AG04450 (cell line): ENCODE measurements at regions of chr4 and their contacts with region 1.

Region 1: GRCh38 chr4:128454281-128455075 is 166.9 kb upstream of the PGRMC2 start:
- DNase-seq: peak; percentile 89
- H3K4me3 ChIP-seq: no peak overlapping the region
- H3K27ac ChIP-seq: peak overlapping the region; percentile 21
- H3K27me3 ChIP-seq: no peaks in the 10 kb centered on the region
- CTCF ChIP-seq: peak; percentile 90

Region 2: DNA sequence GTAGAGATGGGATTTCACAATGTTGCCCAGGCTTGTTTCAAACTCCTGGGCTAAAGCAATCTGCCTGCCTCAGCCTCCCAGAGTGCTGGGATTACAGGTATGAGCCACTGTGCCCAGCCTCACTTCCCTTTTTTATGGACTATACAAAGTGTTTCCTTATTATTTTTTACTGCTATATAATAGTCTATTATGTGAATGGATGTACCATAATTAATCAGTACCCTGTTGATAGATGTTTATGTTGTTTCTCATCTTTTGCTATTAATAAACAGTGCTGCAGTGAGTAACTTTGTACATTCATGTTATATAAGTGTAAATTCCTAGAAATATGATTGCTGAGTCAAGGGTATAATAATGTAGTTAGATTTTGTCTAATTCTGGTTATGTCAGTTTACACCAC is 429.2 kb before region 1 on chr4:
- CTCF ChIA-PET with region 1: no interaction called
- POLR2A ChIA-PET with region 1: no interaction called
- DNase-seq: no peak
- H3K4me3 ChIP-seq: no peak overlapping the region
- H3K27ac ChIP-seq: no peak overlapping the region
- H3K27me3 ChIP-seq: no peaks in the 10 kb centered on the region
- CTCF ChIP-seq: no peak

Region 3: GRCh38 chr4:128191115-128191781 is 263.2 kb before region 1 on chr4:
- CTCF ChIA-PET with region 1: interaction called, 12 read pairs
- POLR2A ChIA-PET with region 1: no interaction called
- DNase-seq: peak; percentile 51
- H3K4me3 ChIP-seq: no peak overlapping the region
- H3K27ac ChIP-seq: no peak overlapping the region
- H3K27me3 ChIP-seq: no peaks in the 10 kb centered on the region
- CTCF ChIP-seq: peak; percentile 86

Region 4: GRCh38 chr4:128393101-128393704 is 61.3 kb before region 1 on chr4:
- CTCF ChIA-PET with region 1: interaction called, 10 read pairs
- POLR2A ChIA-PET with region 1: no interaction called
- DNase-seq: no peak
- H3K4me3 ChIP-seq: no peak overlapping the region
- H3K27ac ChIP-seq: no peak overlapping the region
- H3K27me3 ChIP-seq: no peaks in the 10 kb centered on the region
- CTCF ChIP-seq: no peak

Region 5: GRCh38 chr4:128471576-128471975 is 17.1 kb after region 1 on chr4:
- CTCF ChIA-PET with region 1: interaction called, 43 read pairs
- POLR2A ChIA-PET with region 1: no interaction called
- DNase-seq: no peak
- H3K4me3 ChIP-seq: no peak overlapping the region
- H3K27ac ChIP-seq: no peak overlapping the region
- H3K27me3 ChIP-seq: no peaks in the 10 kb centered on the region
- CTCF ChIP-seq: no peak

Region 6: GRCh38 chr4:128502818-128503527 is 48.5 kb after region 1 on chr4:
- CTCF ChIA-PET with region 1: interaction called, 10 read pairs
- POLR2A ChIA-PET with region 1: no interaction called
- DNase-seq: no peak
- H3K4me3 ChIP-seq: no peak overlapping the region
- H3K27ac ChIP-seq: no peak overlapping the region
- H3K27me3 ChIP-seq: no peaks in the 10 kb centered on the region
- CTCF ChIP-seq: no peak

Region 7: GRCh38 chr4:128553686-128554515 is 99.4 kb after region 1 on chr4:
- CTCF ChIA-PET with region 1: interaction called, 25 read pairs
- POLR2A ChIA-PET with region 1: interaction called, 7 read pairs
- DNase-seq: no peak
- H3K4me3 ChIP-seq: peak overlapping the region; percentile 70
- H3K27ac ChIP-seq: peak overlapping the region; percentile 47
- H3K27me3 ChIP-seq: no peaks in the 10 kb centered on the region
- CTCF ChIP-seq: no peak

Region 8: GRCh38 chr4:128590773-128591172 is 136.3 kb after region 1 on chr4:
- CTCF ChIA-PET with region 1: no interaction called
- POLR2A ChIA-PET with region 1: no interaction called
- DNase-seq: no peak
- H3K4me3 ChIP-seq: no peak overlapping the region
- H3K27ac ChIP-seq: no peak overlapping the region
- H3K27me3 ChIP-seq: no peaks in the 10 kb centered on the region
- CTCF ChIP-seq: no peak

Region 9: GRCh38 chr4:128663336-128663735 is 208.9 kb after region 1 on chr4:
- CTCF ChIA-PET with region 1: no interaction called
- POLR2A ChIA-PET with region 1: no interaction called
- DNase-seq: no peak
- H3K4me3 ChIP-seq: no peak overlapping the region
- H3K27ac ChIP-seq: no peak overlapping the region
- H3K27me3 ChIP-seq: no peaks in the 10 kb centered on the region
- CTCF ChIP-seq: no peak

Region 10: DNA sequence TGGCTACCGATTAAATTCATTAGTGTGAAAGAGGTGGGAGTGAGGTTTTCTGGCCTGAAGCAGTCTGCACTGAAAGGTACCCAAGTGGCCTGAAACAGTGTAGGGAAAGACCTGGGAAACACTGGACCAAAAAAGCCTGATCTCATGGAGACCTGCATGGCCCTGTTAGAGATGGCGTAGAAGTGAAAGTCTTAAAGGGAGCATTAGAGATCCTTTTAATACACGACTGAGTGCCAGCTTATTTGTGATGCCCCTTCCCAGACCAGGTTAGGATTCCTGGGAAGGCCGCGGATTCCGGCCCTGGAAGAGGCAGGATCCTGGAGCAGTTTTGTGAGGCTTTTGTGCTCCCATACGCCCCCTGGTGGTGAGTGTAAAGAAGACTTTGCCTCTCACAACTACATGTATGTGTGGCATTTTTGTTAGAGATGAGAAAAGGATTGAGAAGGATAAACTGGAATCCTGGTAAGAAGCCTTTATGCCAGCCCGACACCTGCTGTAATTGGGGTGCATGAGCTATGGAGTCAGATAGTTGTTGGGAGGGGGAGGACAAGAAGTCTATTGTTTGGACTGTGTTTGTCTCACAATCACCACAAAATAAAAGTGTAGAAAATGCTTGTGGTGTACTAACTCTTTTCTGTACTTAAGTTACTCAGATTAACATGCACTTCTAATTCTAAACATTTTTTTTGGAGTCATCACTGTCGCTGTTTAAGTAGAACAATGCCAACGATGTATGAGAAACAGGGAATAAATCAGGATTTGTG is 409.0 kb after region 1 on chr4:
- CTCF ChIA-PET with region 1: interaction called, 38 read pairs
- POLR2A ChIA-PET with region 1: no interaction called
- DNase-seq: peak; percentile 60
- H3K4me3 ChIP-seq: no peak overlapping the region
- H3K27ac ChIP-seq: peak overlapping the region; percentile 41
- H3K27me3 ChIP-seq: no peaks in the 10 kb centered on the region
- CTCF ChIP-seq: peak; percentile 90